ENCODE measurements at regions of chr5 and their contacts with region 1.

Region 1: GRCh38 chr5:138213161-138214029 is at the start of gene CDC23:
- DNase-seq: peak; percentile 93 to 94
- H3K4me3 ChIP-seq: peak within 1 kb of the TSS; percentile 76 to 92 (median 84)
- H3K27ac ChIP-seq: peak within 1 kb of the TSS; percentile 4 to 65 (median 55)
- H3K4me1 ChIP-seq: peaks cover 0 to 6% of the 10 kb centered on the region in 2 donors
- H3K27me3 ChIP-seq: no peaks in the 10 kb centered on the region
- CTCF ChIP-seq: no peak
- POLR2A ChIP-seq: peak in 1 of 2 donors; percentile 70
- total RNA-seq, gene CDC23: 17.5 to 31.0 (median 22.5) TPM

Region 2: GRCh38 chr5:137580030-137580429 is 633.4 kb before region 1 on chr5:
- intact Hi-C with region 1: no loop called
- DNase-seq: no peak
- H3K4me3 ChIP-seq: no peak overlapping the region
- H3K27ac ChIP-seq: no peak overlapping the region
- H3K4me1 ChIP-seq: no peaks in the 10 kb centered on the region
- H3K27me3 ChIP-seq: no peaks in the 10 kb centered on the region
- CTCF ChIP-seq: peak in 1 of 6 experiments; percentile 13
- POLR2A ChIP-seq: no peak

Region 3: GRCh38 chr5:138037271-138037670 is 176.1 kb before region 1 on chr5:
- intact Hi-C with region 1: no loop called
- DNase-seq: no peak
- H3K4me3 ChIP-seq: no peak overlapping the region
- H3K27ac ChIP-seq: no peak overlapping the region
- H3K4me1 ChIP-seq: peaks cover 8 to 16% of the 10 kb centered on the region in 2 donors
- H3K27me3 ChIP-seq: no peaks in the 10 kb centered on the region
- CTCF ChIP-seq: no peak
- POLR2A ChIP-seq: no peak

Region 4: DNA sequence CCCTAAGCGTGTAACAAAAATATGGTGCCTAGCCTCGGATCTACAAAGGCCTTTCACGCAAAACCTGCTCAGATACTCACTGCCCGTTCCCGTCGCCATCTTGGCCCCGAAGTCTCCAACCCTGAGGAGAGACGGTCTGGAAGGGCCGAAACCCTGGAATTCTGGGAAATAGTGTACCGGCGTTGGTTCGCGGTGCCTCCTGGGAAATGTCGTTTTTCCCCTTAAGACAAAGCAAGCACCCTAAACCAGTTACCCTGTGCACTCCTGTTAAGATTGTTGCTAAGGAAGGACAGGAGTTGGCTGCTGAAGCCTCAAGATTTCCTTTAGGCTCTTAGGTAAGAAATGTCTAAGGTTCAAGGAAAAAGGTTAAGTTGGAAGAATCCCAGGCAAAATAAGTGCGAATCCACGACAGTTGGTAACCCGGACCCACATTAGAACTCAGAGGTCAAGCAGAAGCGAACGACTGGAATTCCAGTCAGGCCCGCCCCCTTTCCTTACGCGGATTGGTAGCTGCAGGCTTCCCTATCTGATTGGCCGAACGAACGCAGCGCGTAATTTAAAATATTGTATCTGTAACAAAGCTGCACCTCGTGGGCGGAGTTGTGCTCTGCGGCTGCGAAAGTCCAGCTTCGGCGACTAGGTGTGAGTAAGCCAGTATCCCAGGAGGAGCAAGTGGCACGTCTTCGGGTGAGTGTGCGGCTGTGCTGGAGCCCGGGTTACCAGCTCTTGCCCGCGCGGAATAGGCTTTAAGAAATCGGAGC is 34.7 kb before region 1 on chr5 and contains the starts of genes BRD8 and KIF20A:
- intact Hi-C with region 1: loop called (anchors 5 kb)
- DNase-seq: peak; percentile 98
- H3K4me3 ChIP-seq: peak within 1 kb of the TSS; percentile 16 to 66 (median 58)
- H3K27ac ChIP-seq: peak within 1 kb of the TSS; percentile 82 to 88 (median 87)
- H3K4me1 ChIP-seq: peaks cover 12% of the 10 kb centered on the region in 2 donors
- H3K27me3 ChIP-seq: no peaks in the 10 kb centered on the region
- CTCF ChIP-seq: no peak
- POLR2A ChIP-seq: peak in 1 of 2 donors; percentile 71
- total RNA-seq, gene BRD8: 56.9 to 96.1 (median 65.3) TPM
- total RNA-seq, gene KIF20A: 0.40 to 2.6 (median 1.9) TPM in 3 of 4 donors, not detected in the other

Region 5: DNA sequence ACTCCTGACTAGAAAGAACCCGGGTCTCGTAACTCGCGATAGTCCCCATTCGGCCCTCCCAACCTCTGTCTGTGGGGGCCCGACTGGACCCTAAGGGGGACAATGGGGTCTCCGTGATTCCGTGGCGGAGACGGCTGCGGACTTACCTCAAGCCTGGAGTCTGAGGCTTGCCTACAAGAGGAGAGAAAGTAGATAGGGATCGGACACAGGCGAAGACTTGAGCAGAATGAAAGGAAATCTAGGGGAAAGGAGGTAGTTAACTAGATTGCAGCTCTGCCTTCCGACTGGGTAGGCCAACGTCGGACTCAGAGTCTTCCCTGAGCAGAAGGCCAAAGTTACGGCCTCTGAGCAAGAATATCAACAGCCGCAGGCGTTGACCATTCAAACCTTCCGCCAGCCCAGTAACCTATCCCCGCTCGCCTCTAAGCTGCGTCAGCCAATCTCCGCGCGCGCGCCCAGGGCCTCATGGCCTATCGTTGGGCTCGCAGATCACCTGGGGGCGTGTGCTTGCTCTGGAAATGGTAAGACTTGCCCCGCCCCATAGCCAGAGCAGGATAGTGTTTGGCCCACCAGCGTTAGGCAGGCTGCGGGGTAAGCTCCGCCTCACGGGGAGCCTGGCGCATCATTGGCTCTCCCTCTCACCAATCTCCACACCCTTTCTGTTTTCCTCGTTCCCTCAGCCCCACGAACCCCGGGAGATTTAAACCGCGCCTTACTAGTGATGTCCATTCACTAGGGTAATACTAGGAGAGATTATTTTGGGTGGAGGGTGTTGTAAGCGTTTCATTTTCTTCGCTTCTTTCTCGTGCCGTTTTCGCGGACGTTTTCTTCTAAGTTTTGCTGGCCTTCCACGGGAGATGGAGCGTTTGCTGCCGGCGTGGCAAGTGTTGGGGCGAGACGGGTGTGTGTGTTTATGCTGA is 118.3 kb after region 1 on chr5 and contains the start of gene CDC25C:
- intact Hi-C with region 1: loop called (anchors 10 kb)
- DNase-seq: peak; percentile 99
- H3K4me3 ChIP-seq: peak within 1 kb of the TSS in 1 of 3 donors; percentile 28
- H3K27ac ChIP-seq: no peak within 1 kb of the TSS
- H3K4me1 ChIP-seq: peaks cover 7 to 10% of the 10 kb centered on the region in 2 donors
- H3K27me3 ChIP-seq: no peaks in the 10 kb centered on the region
- CTCF ChIP-seq: no peak
- POLR2A ChIP-seq: no peak
- total RNA-seq, gene CDC25C: 0.27 TPM in 1 of 4 donors, not detected in the others